OCI-LY7 (cell line): ENCODE measurements at regions of chr7 and their contacts with region 1.

Region 1: GRCh38 chr7:73738612-73739374 is at the start of gene ABHD11:
- DNase-seq: peak; percentile 93
- H3K4me3 ChIP-seq: peak within 1 kb of the TSS; percentile 91
- H3K27ac ChIP-seq: peak within 1 kb of the TSS; percentile 78
- H3K4me1 ChIP-seq: peaks cover 49% of the 10 kb centered on the region
- CTCF ChIP-seq: peak; percentile 41; the same call in 1 of the 2 replicates
- total RNA-seq, gene ABHD11: 25.8 and 27.4 TPM in 2 replicates

Region 2: GRCh38 chr7:73522105-73522872 is 216.5 kb before region 1 on chr7 and contains the start of gene BAZ1B:
- CTCF ChIA-PET with region 1: no interaction called
- POLR2A ChIA-PET with region 1: no interaction called
- intact Hi-C with region 1: loop called (anchors 10 kb)
- DNase-seq: peak; percentile 99
- H3K4me3 ChIP-seq: peak within 1 kb of the TSS; percentile 87
- H3K27ac ChIP-seq: peak within 1 kb of the TSS; percentile 76
- H3K4me1 ChIP-seq: peaks cover 69% of the 10 kb centered on the region
- CTCF ChIP-seq: no peak
- total RNA-seq, gene BAZ1B: 77.8 and 86.8 TPM in 2 replicates

Region 3: GRCh38 chr7:73606801-73607691 is 131.7 kb before region 1 on chr7:
- CTCF ChIA-PET with region 1: interaction called, 7 read pairs
- POLR2A ChIA-PET with region 1: no interaction called
- intact Hi-C with region 1: loop called (anchors 2 kb)
- DNase-seq: peak; percentile 74
- H3K4me3 ChIP-seq: no peak overlapping the region
- H3K27ac ChIP-seq: no peak overlapping the region
- H3K4me1 ChIP-seq: no peaks in the 10 kb centered on the region
- CTCF ChIP-seq: peak; percentile 96

Region 4: DNA sequence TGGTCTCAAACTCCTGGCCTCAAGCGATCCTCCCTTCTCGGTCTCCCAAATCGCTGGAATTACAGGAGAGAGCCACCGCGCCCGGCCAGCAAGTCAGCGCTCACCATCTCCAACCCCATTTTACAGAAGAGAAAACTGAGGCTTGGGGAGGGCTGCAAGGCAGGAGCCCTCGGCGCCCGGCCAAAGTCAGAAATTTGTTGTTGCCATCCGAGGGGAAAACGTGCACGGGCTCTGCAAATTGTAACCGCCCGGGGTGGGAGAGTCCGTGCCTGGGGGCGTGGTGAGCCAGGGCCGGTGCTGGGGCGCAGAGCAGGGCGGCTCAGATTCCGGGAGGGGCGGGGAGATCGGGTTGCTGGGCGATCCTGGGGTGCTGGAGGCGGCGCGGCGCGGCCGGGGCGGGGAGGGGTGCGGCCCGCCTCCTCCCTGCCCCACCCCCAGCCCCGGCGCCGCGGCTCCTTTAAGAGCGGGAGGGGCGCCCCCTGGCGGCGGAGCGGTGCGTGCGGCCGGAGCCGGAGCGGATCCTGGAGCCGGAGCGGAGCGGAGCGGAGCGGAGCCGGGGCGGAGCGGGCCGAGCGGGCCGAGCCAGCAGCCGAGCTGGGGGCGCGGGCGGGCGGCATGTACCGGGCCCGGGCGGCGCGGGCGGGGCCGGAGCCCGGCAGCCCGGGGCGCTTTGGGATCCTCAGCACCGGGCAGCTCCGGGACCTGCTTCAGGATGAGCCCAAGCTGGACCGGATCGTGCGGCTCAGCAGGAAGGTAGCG is 71.3 kb before region 1 on chr7 and contains the start of gene VPS37D:
- CTCF ChIA-PET with region 1: interaction called, 10 read pairs
- POLR2A ChIA-PET with region 1: no interaction called
- intact Hi-C with region 1: loop called (anchors 5 kb)
- DNase-seq: peak; percentile 91
- H3K4me3 ChIP-seq: peak within 1 kb of the TSS; percentile 80
- H3K27ac ChIP-seq: no peak within 1 kb of the TSS
- H3K4me1 ChIP-seq: peaks cover 11% of the 10 kb centered on the region
- CTCF ChIP-seq: peak; percentile 75
- total RNA-seq, gene VPS37D: 2.4 and 5.3 TPM in 2 replicates

Region 5: DNA sequence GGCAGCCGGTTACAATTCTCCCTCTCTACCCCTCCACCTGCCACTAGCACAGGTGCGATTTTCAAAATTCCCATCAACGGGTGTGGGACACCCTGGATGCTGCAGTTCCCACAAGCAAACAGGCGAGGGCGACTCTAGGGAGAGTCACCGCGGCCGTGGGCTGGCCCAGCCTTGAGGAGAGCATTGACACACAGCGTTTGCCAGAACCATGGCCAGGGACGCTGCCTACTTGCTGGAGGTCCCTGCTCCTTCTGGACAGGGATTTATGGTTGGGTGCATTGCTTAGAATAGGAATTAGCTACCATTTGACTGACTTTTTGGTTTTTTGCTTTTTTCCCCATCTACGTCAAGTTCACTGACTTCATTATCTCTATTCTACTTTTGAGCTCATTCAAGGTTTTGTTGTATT is 73.0 kb after region 1 on chr7:
- CTCF ChIA-PET with region 1: interaction called, 13 read pairs
- POLR2A ChIA-PET with region 1: no interaction called
- intact Hi-C with region 1: no loop called
- DNase-seq: peak; percentile 63
- H3K4me3 ChIP-seq: no peak overlapping the region
- H3K27ac ChIP-seq: no peak overlapping the region
- H3K4me1 ChIP-seq: no peaks in the 10 kb centered on the region
- CTCF ChIP-seq: peak; percentile 79

Region 6: GRCh38 chr7:73842247-73842895 is 103.6 kb after region 1 on chr7 and contains the start of gene METTL27:
- CTCF ChIA-PET with region 1: interaction called, 3 read pairs
- POLR2A ChIA-PET with region 1: no interaction called
- intact Hi-C with region 1: loop called (anchors 5 kb)
- DNase-seq: peak; percentile 95
- H3K4me3 ChIP-seq: peak within 1 kb of the TSS; percentile 65
- H3K27ac ChIP-seq: peak within 1 kb of the TSS; percentile 18
- H3K4me1 ChIP-seq: peaks cover 14% of the 10 kb centered on the region
- CTCF ChIP-seq: no peak
- total RNA-seq, gene METTL27: 0.92 and 3.1 TPM in 2 replicates

Region 7: DNA sequence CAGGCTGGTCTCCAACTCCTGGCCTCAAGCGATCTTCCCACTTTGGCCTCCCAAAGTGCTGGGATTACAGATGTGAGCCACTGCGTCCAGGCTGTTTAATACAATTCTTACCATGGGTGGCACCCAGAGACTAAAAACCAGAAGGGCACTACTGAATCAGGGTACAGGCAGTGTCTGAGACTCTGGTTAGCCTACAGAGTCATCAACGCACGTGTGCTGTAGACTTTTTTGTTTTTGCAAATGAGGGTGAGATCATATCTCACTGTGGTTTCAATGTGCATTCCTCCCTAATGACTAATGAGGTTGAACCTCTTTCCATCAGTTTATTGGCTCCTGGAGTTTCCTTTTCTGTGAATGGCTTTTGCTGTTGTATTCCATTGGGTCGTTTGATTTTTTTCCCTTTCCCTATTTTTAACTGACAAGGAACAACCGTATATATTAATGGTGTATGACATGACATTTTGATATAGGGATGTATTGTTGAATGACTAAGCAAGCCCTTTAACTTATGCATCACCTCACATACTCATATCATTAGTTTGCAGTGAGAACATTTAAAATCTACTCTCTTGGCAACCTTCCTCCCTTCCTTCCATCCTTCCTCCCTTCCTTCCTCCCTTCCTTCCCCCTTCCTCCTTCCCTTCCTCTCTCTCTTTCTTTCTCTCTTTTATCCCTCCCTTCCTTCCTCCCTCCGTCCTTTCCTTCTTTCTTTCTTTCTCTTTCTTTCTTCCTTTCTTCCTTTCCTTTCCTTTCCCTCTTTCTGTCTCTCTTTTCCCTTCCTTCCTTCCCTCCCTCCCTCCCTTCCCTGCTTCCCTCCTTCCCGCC is 112.8 kb after region 1 on chr7:
- CTCF ChIA-PET with region 1: interaction called, 3 read pairs
- POLR2A ChIA-PET with region 1: interaction called, 3 read pairs
- intact Hi-C with region 1: loop called (anchors 2 kb)
- DNase-seq: no peak
- H3K4me3 ChIP-seq: no peak overlapping the region
- H3K27ac ChIP-seq: no peak overlapping the region
- H3K4me1 ChIP-seq: no peaks in the 10 kb centered on the region
- CTCF ChIP-seq: no peak